ENCODE measurements at regions of chr9 and their contacts with region 1.

Region 1: GRCh38 chr9:35696525-35697215 is 6.9 kb upstream of the TPM2 start:
- DNase-seq: peak; percentile 66 to 80
- ATAC-seq: peak; percentile 79 to 88
- H3K4me3 ChIP-seq: no peak overlapping the region
- H3K27ac ChIP-seq: peak overlapping the region; percentile 1 to 43; a peak in 1 of 6 replicates
- H3K4me1 ChIP-seq: peaks cover 16% of the 10 kb centered on the region
- CTCF ChIP-seq: peak; percentile 74
- EP300 ChIP-seq: no peak
- POLR2A ChIP-seq: no peak
- RAD21 ChIP-seq: peak; percentile 41 to 60

Region 2: DNA sequence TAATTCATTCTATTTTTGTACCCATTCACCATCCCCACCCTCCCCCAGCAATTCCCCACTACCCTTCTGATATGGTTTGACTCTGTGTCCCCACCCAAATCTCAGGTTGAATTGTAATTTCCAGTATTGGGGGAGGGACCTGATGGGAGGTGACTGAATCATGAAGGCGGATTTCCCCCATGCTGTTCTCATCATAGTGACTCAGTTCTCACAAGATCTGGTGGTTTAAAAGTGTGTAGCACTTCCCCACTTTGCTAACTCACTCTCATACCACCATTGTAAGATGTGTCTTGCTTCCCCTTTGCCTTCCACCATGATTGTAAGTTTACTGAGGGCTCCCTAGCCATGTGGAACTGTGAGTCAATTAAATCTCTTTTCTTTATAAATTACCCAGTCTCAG is 117.5 kb before region 1 on chr9:
- CTCF ChIA-PET with region 1: no interaction called
- POLR2A ChIA-PET with region 1: no interaction called
- DNase-seq: no peak
- ATAC-seq: no peak
- H3K4me3 ChIP-seq: no peak overlapping the region
- H3K27ac ChIP-seq: no peak overlapping the region
- H3K4me1 ChIP-seq: no peaks in the 10 kb centered on the region
- CTCF ChIP-seq: no peak
- EP300 ChIP-seq: no peak
- POLR2A ChIP-seq: no peak
- RAD21 ChIP-seq: no peak

Region 3: GRCh38 chr9:35675732-35676392 is 20.8 kb before region 1 on chr9:
- CTCF ChIA-PET with region 1: interaction called, 498 read pairs
- POLR2A ChIA-PET with region 1: interaction called, 18 read pairs
- DNase-seq: no peak
- ATAC-seq: no peak
- H3K4me3 ChIP-seq: no peak overlapping the region
- H3K27ac ChIP-seq: 0 out of 6 replicates have a peak overlapping the region, but pooled peaks of 1 of the 2 experiments have one; percentile 10
- H3K4me1 ChIP-seq: peaks cover 21% of the 10 kb centered on the region
- CTCF ChIP-seq: no peak
- EP300 ChIP-seq: no peak
- POLR2A ChIP-seq: no peak
- RAD21 ChIP-seq: no peak

Region 4: GRCh38 chr9:35741740-35742139 is 45.1 kb after region 1 on chr9:
- CTCF ChIA-PET with region 1: interaction called, 16 read pairs
- POLR2A ChIA-PET with region 1: no interaction called
- DNase-seq: no peak
- ATAC-seq: no peak; a peak in 1 of 6 replicates
- H3K4me3 ChIP-seq: no peak overlapping the region
- H3K27ac ChIP-seq: no peak overlapping the region
- H3K4me1 ChIP-seq: peaks cover 13% of the 10 kb centered on the region
- CTCF ChIP-seq: no peak
- EP300 ChIP-seq: no peak
- POLR2A ChIP-seq: no peak
- RAD21 ChIP-seq: no peak